ENCODE measurements at regions of chr11 and their contacts with region 1.

Region 1: DNA sequence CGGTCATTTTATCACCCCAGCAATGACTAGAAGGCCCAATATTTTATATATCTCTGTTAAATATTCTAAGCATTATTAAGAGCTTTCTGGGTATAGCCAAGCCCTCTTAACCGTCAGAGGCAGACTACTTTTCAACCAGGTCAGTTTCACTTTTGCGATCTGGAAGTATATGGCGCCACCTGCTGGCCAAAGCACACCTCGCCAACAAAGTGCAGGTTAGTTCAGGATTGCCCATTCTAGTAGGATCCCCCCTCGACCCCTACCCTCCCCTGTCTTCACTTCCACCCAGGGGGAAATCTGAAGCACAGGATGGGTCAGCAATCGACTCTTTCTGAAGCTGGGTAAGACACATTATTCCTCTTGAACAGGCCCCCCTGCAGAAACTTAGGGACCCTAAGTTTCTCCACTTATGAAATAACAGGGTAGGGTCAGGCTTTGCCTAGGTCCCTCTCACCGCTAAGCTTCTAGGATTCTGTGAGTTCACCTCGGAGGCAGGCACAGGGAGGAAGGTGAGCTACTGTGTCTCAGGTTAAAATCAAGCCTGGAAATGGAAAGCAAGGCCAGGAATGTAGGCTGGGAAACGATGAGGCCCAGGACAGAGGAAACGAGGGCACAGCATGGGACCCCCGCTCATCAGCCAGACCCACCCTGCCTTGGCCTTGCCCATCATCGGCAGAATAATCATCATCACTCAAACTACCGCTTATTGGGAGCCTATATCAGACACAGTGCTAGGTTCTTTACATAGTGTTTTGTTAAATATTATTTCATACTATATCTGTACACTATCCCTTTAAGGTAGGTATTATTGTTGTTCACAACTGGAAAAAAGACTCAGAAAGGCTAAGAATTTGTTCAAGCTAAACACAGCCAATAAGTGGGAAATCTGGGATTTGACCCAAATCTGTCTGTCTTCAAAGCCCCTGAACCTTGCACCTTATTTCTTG is 35.6 kb downstream of the KCNJ1 start:
- DNase-seq: peak; percentile 92
- ATAC-seq: peak; percentile 85
- H3K4me3 Mint-ChIP-seq: peak overlapping the region; percentile 52
- H3K27ac Mint-ChIP-seq: peak overlapping the region; percentile 92
- H3K4me1 Mint-ChIP-seq: peaks cover 26% of the 10 kb centered on the region
- H3K27me3 Mint-ChIP-seq: no peaks in the 10 kb centered on the region
- CTCF ChIP-seq: peak; percentile 82

Region 2: GRCh38 chr11:128180446-128181087 is 650.9 kb before region 1 on chr11:
- CTCF ChIA-PET with region 1: interaction called, 44 read pairs
- POLR2A ChIA-PET with region 1: interaction called, 3 read pairs
- intact Hi-C with region 1: no loop called
- DNase-seq: no peak
- ATAC-seq: no peak
- H3K4me3 Mint-ChIP-seq: no peak overlapping the region
- H3K27ac Mint-ChIP-seq: no peak overlapping the region
- H3K4me1 Mint-ChIP-seq: peaks cover 23% of the 10 kb centered on the region
- H3K27me3 Mint-ChIP-seq: no peaks in the 10 kb centered on the region
- CTCF ChIP-seq: no peak

Region 3: GRCh38 chr11:128552783-128553661 is 278.4 kb before region 1 on chr11:
- CTCF ChIA-PET with region 1: interaction called, 11 read pairs
- POLR2A ChIA-PET with region 1: no interaction called
- intact Hi-C with region 1: no loop called
- DNase-seq: peak; percentile 41
- ATAC-seq: peak; percentile 8
- H3K4me3 Mint-ChIP-seq: peak overlapping the region; percentile 31
- H3K27ac Mint-ChIP-seq: peak overlapping the region; percentile 89
- H3K4me1 Mint-ChIP-seq: peaks cover 59% of the 10 kb centered on the region
- H3K27me3 Mint-ChIP-seq: no peaks in the 10 kb centered on the region
- CTCF ChIP-seq: no peak

Region 4: DNA sequence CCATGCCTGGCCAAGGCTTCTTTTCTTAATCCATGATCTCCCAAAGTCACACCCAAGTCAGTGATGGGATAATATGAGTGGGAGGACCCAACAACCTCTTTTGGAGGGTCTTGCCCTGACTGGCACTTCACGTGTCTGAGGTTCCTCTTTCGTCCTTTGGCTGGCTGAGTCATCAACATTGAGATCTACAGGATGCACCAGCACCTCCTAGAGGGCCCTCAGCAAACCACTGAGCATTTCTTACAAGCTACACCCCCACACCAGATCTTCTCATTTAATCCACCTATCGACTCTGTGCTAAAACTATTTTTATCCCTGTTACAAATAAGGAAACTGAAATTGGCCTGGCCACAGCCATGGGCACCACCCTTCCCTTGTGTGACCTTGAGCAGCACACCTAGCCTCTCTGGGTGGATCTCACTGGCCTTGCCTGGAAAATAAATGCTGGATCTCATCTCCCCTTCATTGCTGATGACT is 74.2 kb before region 1 on chr11:
- CTCF ChIA-PET with region 1: interaction called, 14 read pairs
- POLR2A ChIA-PET with region 1: interaction called, 5 read pairs
- intact Hi-C with region 1: loop called (anchors 5 kb)
- DNase-seq: peak; percentile 88
- ATAC-seq: peak; percentile 81
- H3K4me3 Mint-ChIP-seq: peak overlapping the region; percentile 23
- H3K27ac Mint-ChIP-seq: peak overlapping the region; percentile 94
- H3K4me1 Mint-ChIP-seq: peaks cover 83% of the 10 kb centered on the region
- H3K27me3 Mint-ChIP-seq: no peaks in the 10 kb centered on the region
- CTCF ChIP-seq: peak; percentile 70

Region 5: DNA sequence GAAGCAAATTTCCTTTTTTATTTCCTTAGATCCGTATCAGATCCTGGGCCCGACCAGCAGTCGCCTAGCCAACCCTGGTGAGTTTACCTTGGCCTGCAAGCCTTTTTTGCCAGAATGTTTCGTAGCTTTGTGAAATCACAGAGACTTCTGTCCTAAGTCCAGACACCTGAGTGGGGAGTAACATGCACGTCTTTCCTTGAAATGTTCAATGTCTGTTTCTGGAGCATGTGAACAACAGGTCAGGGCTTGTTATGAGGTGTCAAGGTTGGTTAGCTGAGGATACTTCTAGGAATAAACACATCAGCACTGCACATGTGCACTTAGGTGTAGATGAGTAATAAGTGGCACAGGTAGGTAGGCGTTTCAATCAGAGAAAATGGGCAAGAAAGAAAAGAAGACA is 22.3 kb before region 1 on chr11:
- CTCF ChIA-PET with region 1: interaction called, 16 read pairs
- POLR2A ChIA-PET with region 1: no interaction called
- intact Hi-C with region 1: no loop called
- DNase-seq: no peak
- ATAC-seq: peak; percentile 42
- H3K4me3 Mint-ChIP-seq: no peak overlapping the region
- H3K27ac Mint-ChIP-seq: no peak overlapping the region
- H3K4me1 Mint-ChIP-seq: peaks cover 27% of the 10 kb centered on the region
- H3K27me3 Mint-ChIP-seq: no peaks in the 10 kb centered on the region
- CTCF ChIP-seq: no peak

Region 6: GRCh38 chr11:128917144-128917724 is 85.8 kb after region 1 on chr11:
- CTCF ChIA-PET with region 1: no interaction called
- POLR2A ChIA-PET with region 1: no interaction called
- intact Hi-C with region 1: no loop called
- DNase-seq: no peak
- ATAC-seq: no peak
- H3K4me3 Mint-ChIP-seq: no peak overlapping the region
- H3K27ac Mint-ChIP-seq: no peak overlapping the region
- H3K4me1 Mint-ChIP-seq: peaks cover 4% of the 10 kb centered on the region
- H3K27me3 Mint-ChIP-seq: peaks cover 7% of the 10 kb centered on the region
- CTCF ChIP-seq: no peak

Region 7: GRCh38 chr11:129090056-129090455 is 258.6 kb after region 1 on chr11:
- CTCF ChIA-PET with region 1: no interaction called
- POLR2A ChIA-PET with region 1: no interaction called
- intact Hi-C with region 1: no loop called
- DNase-seq: no peak
- ATAC-seq: no peak
- H3K4me3 Mint-ChIP-seq: no peak overlapping the region
- H3K27ac Mint-ChIP-seq: no peak overlapping the region
- H3K4me1 Mint-ChIP-seq: no peaks in the 10 kb centered on the region
- H3K27me3 Mint-ChIP-seq: no peaks in the 10 kb centered on the region
- CTCF ChIP-seq: no peak

Measured in activated CD8-positive, alpha-beta T cell treated with anti-CD3 and anti-CD28 coated beads for 36 hours (primary cell).